ENCODE measurements at regions of chr7 and their contacts with region 1.

Region 1: GRCh38 chr7:120950539-120951308 is at the start of gene ING3:
- DNase-seq: peak; percentile 98
- ATAC-seq: peak; percentile 92 to 95
- H3K4me3 ChIP-seq: peak within 1 kb of the TSS; percentile 73 to 83 (median 78)
- H3K27ac ChIP-seq: peak within 1 kb of the TSS; percentile 94 to 98 (median 96)
- H3K4me1 ChIP-seq: peaks cover 15% of the 10 kb centered on the region in 2 donors
- H3K27me3 ChIP-seq: no peaks in the 10 kb centered on the region
- CTCF ChIP-seq: no peak
- POLR2A ChIP-seq: peak; percentile 52 to 60
- total RNA-seq, gene ING3: 5.8 to 9.9 (median 6.7) TPM

Region 2: GRCh38 chr7:120987683-120988590 is 37.2 kb after region 1 on chr7:
- in situ Hi-C with region 1: no loop called
- intact Hi-C with region 1: loop called (anchors 2 kb)
- DNase-seq: peak; percentile 84 to 91
- ATAC-seq: peak; percentile 60 to 76
- H3K4me3 ChIP-seq: peak overlapping the region; percentile 65 to 72 (median 66)
- H3K27ac ChIP-seq: peak overlapping the region; percentile 91 to 98 (median 94)
- H3K4me1 ChIP-seq: peaks cover 10 to 21% of the 10 kb centered on the region in 2 donors
- H3K27me3 ChIP-seq: no peaks in the 10 kb centered on the region
- CTCF ChIP-seq: peak; percentile 83 to 96 (median 94)
- POLR2A ChIP-seq: no peak

Region 3: DNA sequence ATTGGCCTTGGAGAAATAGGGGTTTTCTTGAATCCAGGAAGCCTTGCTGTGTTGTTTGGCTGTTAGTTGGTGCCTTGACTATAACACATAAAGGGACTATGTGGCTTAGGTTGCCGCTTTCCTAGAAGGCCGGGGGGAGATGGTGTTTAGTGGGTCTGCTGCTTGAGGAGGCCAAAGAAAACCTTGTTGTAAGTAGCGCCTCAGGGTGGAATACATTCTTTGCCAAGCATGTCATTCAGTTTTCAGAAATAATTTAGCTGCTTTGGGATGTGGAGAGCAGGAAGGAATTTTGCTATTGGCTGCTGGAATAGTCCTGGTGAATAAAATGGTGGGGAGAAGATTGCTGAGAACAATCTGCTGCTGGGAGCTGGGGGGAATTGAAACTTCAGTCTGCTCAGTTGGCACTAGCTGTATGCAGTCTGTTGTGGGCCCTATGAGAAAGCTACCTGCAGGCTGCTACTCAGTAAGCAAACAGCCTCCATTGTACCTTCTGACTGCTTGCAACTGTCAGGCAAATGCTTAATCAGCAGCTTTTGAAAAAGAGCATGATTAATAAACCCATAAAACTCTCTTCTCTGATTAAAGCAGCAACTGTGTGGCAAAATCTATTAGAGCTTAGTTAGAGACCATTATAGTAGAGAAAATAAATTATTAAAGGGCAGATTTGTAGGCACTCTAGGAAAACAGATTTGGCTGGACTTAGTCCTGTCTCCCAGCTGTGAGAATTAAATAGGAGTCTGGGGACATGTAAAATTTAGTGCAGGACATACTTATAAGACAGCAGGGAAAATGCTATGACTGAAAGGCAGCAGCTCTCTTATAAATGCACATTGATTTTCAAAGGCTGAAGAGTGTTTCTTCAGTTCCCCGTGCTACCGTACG is 245.4 kb after region 1 on chr7:
- in situ Hi-C with region 1: no loop called
- intact Hi-C with region 1: loop called (anchors 10 kb)
- DNase-seq: no peak
- ATAC-seq: no peak
- H3K4me3 ChIP-seq: no peak overlapping the region
- H3K27ac ChIP-seq: peak overlapping the region; percentile 79 to 90 (median 83)
- H3K4me1 ChIP-seq: peaks cover 71 to 91% of the 10 kb centered on the region in 2 donors
- H3K27me3 ChIP-seq: no peaks in the 10 kb centered on the region
- CTCF ChIP-seq: no peak
- POLR2A ChIP-seq: no peak

Region 4: DNA sequence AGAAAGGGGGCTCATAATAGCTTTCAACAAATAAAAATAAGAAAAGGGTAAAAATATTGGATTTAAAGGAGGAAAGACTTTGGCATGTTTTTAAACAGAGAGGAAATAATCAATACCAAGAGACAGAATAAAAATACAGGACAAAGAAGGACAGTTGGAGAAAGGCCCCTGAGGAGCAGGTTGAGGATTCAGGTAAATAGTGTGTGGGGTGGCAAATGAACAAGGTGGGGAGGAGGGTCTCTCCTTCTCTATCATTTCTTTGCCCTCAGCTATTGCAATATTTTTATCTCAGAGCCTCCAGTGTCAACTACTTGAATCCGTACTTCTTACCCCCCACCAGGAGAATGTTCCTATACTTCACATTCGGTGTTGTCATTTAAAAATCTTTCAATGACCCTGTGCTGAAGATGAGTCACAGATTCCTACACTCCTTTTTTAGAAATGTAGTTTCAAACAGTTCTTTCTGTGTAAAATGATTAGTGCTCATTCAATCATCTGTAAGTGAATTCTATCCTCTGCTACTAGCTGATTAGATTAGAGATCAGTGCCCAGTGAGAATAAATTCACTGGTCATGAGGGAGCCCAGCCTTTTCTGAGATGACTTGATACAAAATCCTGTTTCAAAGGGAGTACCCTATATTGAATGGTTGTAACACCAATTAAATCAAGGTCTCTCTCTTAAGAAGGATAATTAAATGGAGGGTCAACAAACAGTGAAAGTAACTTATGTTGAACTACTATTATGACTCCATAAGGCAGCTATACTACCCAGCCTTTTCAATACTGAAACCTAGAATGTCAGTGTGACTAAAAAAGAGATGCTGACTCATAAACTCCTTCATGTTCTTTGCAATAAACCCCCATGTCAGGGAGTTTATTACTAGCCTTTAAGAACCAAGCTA is 327.6 kb after region 1 on chr7:
- in situ Hi-C with region 1: loop called in 1 of 4 experiments (anchors 25 kb)
- intact Hi-C with region 1: no loop called
- DNase-seq: no peak
- ATAC-seq: peak in 1 of 2 donors; percentile 50
- H3K4me3 ChIP-seq: no peak overlapping the region
- H3K27ac ChIP-seq: peak overlapping the region; percentile 50 to 60 (median 57)
- H3K4me1 ChIP-seq: peaks cover 0 to 3% of the 10 kb centered on the region in 2 donors
- H3K27me3 ChIP-seq: no peaks in the 10 kb centered on the region
- CTCF ChIP-seq: no peak
- POLR2A ChIP-seq: no peak